ENCODE measurements at regions of chrX and their contacts with region 1.

Region 1: DNA sequence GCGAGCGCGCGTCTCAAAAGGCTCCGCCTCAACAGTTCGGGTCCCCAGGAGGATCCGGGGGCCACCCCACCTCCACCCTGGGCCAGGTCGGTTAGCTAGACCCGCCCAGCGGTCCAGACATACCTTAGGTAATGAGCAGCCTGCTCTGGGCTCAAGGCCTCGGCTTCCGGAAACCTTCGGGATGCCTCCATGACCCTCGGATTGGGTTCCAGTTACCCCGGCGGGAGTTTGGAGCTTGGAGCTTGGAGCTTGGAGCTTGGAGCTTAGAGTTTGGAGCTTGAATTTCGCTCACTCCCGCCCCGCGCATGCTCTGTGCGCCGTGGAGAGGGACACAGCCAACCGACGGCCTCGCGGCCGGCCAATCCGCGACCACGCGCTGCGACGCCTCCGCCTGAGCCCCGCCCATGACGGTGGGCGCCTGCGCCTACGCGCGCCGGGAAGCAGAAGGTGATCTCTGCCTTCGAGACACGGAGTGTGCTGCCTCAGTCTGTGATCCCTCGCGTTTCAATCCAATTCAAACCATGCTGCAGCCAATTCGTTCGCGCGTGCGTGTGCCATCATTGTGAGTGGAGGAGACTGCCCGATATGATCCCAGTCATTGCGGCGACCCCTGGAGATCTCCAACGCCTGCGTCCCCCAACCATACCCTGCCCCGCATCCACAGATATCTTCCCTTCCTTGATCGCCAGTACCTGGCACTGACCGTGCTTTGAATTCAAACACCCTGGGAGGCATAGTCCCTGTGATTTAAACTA is at the start of gene ERCC6L:
- DNase-seq: peak; percentile 89
- H3K4me3 ChIP-seq: peak within 1 kb of the TSS; percentile 35 to 82 (median 63)
- H3K27ac ChIP-seq: peak within 1 kb of the TSS; percentile 55
- H3K4me1 ChIP-seq: peaks cover 9% of the 10 kb centered on the region
- H3K27me3 ChIP-seq: no peaks in the 10 kb centered on the region
- CTCF ChIP-seq: no peak
- POLR2A ChIP-seq: peak; percentile 80
- total RNA-seq, gene ERCC6L: 6.7 and 7.5 TPM in 2 replicates

Region 2: DNA sequence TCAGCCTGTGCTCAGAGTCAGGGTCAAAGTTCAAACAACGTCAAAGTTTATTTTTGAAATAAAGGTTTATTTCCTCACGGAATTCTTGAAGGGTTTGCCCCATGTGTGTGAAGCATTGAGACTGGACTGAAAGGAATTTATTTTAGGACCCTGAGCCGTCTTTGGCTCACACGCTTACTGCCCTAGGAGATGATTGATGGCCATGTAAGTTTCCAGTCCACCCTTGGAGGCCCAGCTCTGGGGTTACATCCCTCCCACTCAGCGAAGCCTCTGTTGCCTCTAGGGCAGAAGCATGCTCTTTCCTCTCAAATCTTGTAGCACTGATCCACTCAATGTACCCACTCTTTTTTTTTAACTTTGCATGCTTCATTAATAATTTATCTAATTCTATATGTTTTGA is 332.8 kb before region 1 on chrX:
- CTCF ChIA-PET with region 1: no interaction called
- POLR2A ChIA-PET with region 1: no interaction called
- dilution Hi-C with region 1: no loop called
- intact Hi-C with region 1: no loop called
- DNase-seq: no peak
- H3K4me3 ChIP-seq: no peak overlapping the region
- H3K27ac ChIP-seq: no peak overlapping the region
- H3K4me1 ChIP-seq: no peaks in the 10 kb centered on the region
- H3K27me3 ChIP-seq: peaks cover 12 to 19% of the 10 kb centered on the region in 2 experiments
- CTCF ChIP-seq: no peak
- POLR2A ChIP-seq: no peak

Region 3: GRCh38 chrX:72052415-72053090 is 186.3 kb before region 1 on chrX:
- CTCF ChIA-PET with region 1: no interaction called
- POLR2A ChIA-PET with region 1: no interaction called
- dilution Hi-C with region 1: no loop called
- intact Hi-C with region 1: loop called (anchors 5 kb)
- DNase-seq: peak; percentile 64
- H3K4me3 ChIP-seq: no peak overlapping the region
- H3K27ac ChIP-seq: peak overlapping the region; percentile 58
- H3K4me1 ChIP-seq: peaks cover 24% of the 10 kb centered on the region
- H3K27me3 ChIP-seq: no peaks in the 10 kb centered on the region
- CTCF ChIP-seq: no peak
- POLR2A ChIP-seq: no peak

Region 4: DNA sequence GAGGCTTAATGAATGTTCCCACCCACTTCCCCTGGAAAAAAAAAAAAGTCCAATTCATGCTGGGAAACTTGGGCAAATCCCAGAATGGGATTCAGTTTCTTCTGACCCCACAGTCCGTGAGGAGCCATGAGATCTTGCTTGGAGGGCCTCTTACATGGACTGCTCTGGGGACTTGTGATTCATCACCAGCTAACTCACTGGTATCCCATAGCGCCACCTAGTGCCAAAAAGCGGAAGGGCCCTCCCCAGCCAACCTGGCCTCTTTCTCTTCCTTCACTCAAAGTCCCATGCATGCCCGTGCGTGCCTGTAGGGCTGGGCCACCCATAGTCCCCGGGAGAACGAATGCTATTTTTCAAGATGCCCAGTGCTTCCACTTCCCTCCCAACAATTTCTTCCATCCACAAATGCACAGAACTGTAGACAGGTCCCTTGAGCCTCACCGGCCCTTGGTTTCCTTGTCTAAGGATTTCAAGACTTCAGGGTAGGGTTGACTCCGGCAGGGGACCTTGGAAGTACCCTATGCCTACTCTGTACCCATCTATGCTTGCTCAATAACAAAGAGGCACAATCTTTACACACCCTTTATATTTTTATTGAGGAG is 112.3 kb before region 1 on chrX:
- CTCF ChIA-PET with region 1: no interaction called
- POLR2A ChIA-PET with region 1: no interaction called
- dilution Hi-C with region 1: no loop called
- intact Hi-C with region 1: no loop called
- DNase-seq: peak; percentile 86
- H3K4me3 ChIP-seq: no peak overlapping the region
- H3K27ac ChIP-seq: no peak overlapping the region
- H3K4me1 ChIP-seq: peaks cover 56% of the 10 kb centered on the region
- H3K27me3 ChIP-seq: no peaks in the 10 kb centered on the region
- CTCF ChIP-seq: peak; percentile 67 to 80
- POLR2A ChIP-seq: no peak

Region 5: DNA sequence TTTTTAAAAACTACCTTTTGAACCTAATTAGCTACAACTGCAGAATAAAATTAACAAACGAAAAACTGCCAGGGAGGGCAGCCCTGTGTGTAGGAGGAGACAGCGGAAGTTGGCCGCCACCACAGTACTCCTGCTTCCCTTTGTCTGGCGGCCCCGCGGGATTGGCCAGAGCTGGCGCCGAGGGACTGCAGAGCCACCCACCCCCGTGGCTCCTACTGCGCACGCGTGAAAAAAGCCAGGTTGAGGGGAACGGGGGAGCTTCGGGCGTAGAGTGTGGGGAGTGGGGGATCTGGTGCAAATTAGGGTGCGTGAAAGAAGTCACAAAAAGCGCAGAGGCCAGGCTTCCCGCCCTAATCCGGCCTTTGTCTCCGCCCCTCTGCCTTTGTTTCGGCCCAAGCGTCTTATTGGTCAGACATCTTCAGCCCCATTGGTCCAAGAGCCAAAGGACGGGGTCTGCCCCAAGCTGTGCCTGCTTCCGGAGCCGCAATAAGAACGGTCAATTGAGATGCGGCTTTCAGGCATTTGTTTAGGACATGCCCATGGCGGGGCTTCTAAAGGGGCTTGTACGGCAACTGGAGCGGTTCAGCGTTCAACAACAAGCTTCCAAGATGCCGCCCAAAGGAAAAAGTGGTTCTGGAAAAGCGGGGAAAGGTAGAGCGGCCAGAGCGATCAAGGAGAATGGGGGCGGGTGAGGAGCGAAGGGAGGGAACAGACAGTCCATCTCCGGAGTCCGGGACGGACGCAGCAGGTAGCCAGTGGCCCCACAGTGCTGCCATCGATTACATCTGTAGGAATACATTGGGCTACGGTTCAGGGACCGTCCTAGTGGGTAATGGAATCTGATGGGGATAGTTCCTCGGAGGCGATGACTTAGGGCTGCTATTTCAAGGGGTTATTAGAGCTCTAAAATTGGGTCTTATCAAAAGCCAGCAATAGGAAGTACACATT is 57.4 kb before region 1 on chrX and contains the start of gene PIN4:
- CTCF ChIA-PET with region 1: no interaction called
- POLR2A ChIA-PET with region 1: interaction called, 3 read pairs
- dilution Hi-C with region 1: no loop called
- intact Hi-C with region 1: loop called (anchors 1 kb)
- DNase-seq: peak; percentile 97
- H3K4me3 ChIP-seq: peak within 1 kb of the TSS; percentile 71 to 88 (median 75)
- H3K27ac ChIP-seq: peak within 1 kb of the TSS; percentile 71
- H3K4me1 ChIP-seq: peaks cover 10% of the 10 kb centered on the region
- H3K27me3 ChIP-seq: no peaks in the 10 kb centered on the region
- CTCF ChIP-seq: no peak
- POLR2A ChIP-seq: no peak
- total RNA-seq, gene PIN4: 9.9 and 10.4 TPM in 2 replicates

Region 6: GRCh38 chrX:72276478-72276953 is 37.6 kb after region 1 on chrX:
- CTCF ChIA-PET with region 1: interaction called, 6 read pairs
- POLR2A ChIA-PET with region 1: interaction called, 7 read pairs
- dilution Hi-C with region 1: no loop called
- intact Hi-C with region 1: loop called (anchors 5 kb)
- DNase-seq: peak; percentile 22
- H3K4me3 ChIP-seq: peak overlapping the region; percentile 56 to 97 (median 82)
- H3K27ac ChIP-seq: peak overlapping the region; percentile 60
- H3K4me1 ChIP-seq: peaks cover 39% of the 10 kb centered on the region
- H3K27me3 ChIP-seq: peaks cover 0 to 2% of the 10 kb centered on the region in 2 experiments
- CTCF ChIP-seq: no peak
- POLR2A ChIP-seq: no peak

Measured in endothelial cell of umbilical vein (primary cell).